ENCODE measurements at regions of chr9 and their contacts with region 1.

Region 1: GRCh38 chr9:3525836-3526164 is at the start of gene RFX3:
- DNase-seq: peak; percentile 96
- H3K4me3 Mint-ChIP-seq: peak within 1 kb of the TSS; percentile 89
- H3K27ac Mint-ChIP-seq: peak within 1 kb of the TSS; percentile 100
- H3K4me1 Mint-ChIP-seq: peaks cover 47% of the 10 kb centered on the region
- H3K27me3 Mint-ChIP-seq: peaks cover 2% of the 10 kb centered on the region
- total RNA-seq, gene RFX3: 11.6 and 12.8 TPM in 2 replicates

Region 2: GRCh38 chr9:3342159-3342777 is 183.5 kb before region 1 on chr9:
- intact Hi-C with region 1: loop called (anchors 5 kb)
- DNase-seq: no peak
- H3K4me3 Mint-ChIP-seq: no peak overlapping the region
- H3K27ac Mint-ChIP-seq: peak overlapping the region; percentile 66
- H3K4me1 Mint-ChIP-seq: peaks cover 15% of the 10 kb centered on the region
- H3K27me3 Mint-ChIP-seq: no peaks in the 10 kb centered on the region

Region 3: GRCh38 chr9:3467593-3468219 is 58.1 kb before region 1 on chr9:
- intact Hi-C with region 1: loop called (anchors 2 kb)
- DNase-seq: peak; percentile 86
- H3K4me3 Mint-ChIP-seq: no peak overlapping the region
- H3K27ac Mint-ChIP-seq: no peak overlapping the region
- H3K4me1 Mint-ChIP-seq: peaks cover 4% of the 10 kb centered on the region
- H3K27me3 Mint-ChIP-seq: no peaks in the 10 kb centered on the region

Region 4: GRCh38 chr9:3549225-3549624 is 23.4 kb after region 1 on chr9:
- intact Hi-C with region 1: no loop called
- DNase-seq: no peak
- H3K4me3 Mint-ChIP-seq: no peak overlapping the region
- H3K27ac Mint-ChIP-seq: no peak overlapping the region
- H3K4me1 Mint-ChIP-seq: no peaks in the 10 kb centered on the region
- H3K27me3 Mint-ChIP-seq: no peaks in the 10 kb centered on the region

Region 5: DNA sequence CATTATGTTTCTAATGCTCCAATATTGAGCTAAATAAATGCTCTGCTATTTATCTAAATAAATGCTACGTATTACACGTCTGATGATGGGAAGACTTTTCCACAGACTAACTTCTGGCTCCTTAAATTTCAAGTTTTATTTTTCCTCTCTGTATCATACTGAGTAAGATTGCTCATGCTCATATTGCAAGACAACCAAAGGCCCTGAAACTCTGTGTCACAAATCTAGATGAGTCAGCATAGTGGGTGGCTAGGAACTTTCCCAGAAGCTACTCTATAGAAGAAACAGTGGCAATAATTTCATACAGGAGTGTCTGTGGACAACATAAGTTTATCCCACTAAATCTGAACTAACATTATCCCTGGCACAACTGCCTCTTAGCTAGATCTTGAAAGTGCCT is 53.0 kb after region 1 on chr9:
- intact Hi-C with region 1: loop called (anchors 2 kb)
- DNase-seq: no peak
- H3K4me3 Mint-ChIP-seq: no peak overlapping the region
- H3K27ac Mint-ChIP-seq: no peak overlapping the region
- H3K4me1 Mint-ChIP-seq: peaks cover 7% of the 10 kb centered on the region
- H3K27me3 Mint-ChIP-seq: no peaks in the 10 kb centered on the region

Region 6: GRCh38 chr9:3931996-3932906 is 406.5 kb after region 1 on chr9:
- intact Hi-C with region 1: loop called (anchors 5 kb)
- DNase-seq: no peak
- H3K4me3 Mint-ChIP-seq: no peak overlapping the region
- H3K27ac Mint-ChIP-seq: no peak overlapping the region
- H3K4me1 Mint-ChIP-seq: peaks cover 3% of the 10 kb centered on the region
- H3K27me3 Mint-ChIP-seq: no peaks in the 10 kb centered on the region

Region 7: GRCh38 chr9:4679268-4680172 is 1153.7 kb after region 1 on chr9 and contains the start of gene CDC37L1:
- intact Hi-C with region 1: loop called (anchors 2 kb)
- DNase-seq: peak; percentile 100
- H3K4me3 Mint-ChIP-seq: no peak within 1 kb of the TSS
- H3K27ac Mint-ChIP-seq: no peak within 1 kb of the TSS
- H3K4me1 Mint-ChIP-seq: peaks cover 7% of the 10 kb centered on the region
- H3K27me3 Mint-ChIP-seq: no peaks in the 10 kb centered on the region
- total RNA-seq, gene CDC37L1: 11.3 and 12.1 TPM in 2 replicates

Measured in activated CD4-positive, alpha-beta T cell treated with anti-CD3 and anti-CD28 coated beads, Interleukin-2, amount 10 ng/mL, durations not matched to agents 24 days and 14 days (primary cell).